A673 (cell line): ENCODE measurements at regions of chr1 and their contacts with region 1.

Region 1: GRCh38 chr1:53278201-53278725 is 39.9 kb upstream of the MAGOH start:
- DNase-seq: peak; percentile 45
- H3K4me3 ChIP-seq: no peak overlapping the region
- H3K27ac ChIP-seq: no peak overlapping the region
- H3K4me1 ChIP-seq: no peaks in the 10 kb centered on the region
- H3K27me3 ChIP-seq: no peaks in the 10 kb centered on the region
- CTCF ChIP-seq: peak; percentile 91

Region 2: DNA sequence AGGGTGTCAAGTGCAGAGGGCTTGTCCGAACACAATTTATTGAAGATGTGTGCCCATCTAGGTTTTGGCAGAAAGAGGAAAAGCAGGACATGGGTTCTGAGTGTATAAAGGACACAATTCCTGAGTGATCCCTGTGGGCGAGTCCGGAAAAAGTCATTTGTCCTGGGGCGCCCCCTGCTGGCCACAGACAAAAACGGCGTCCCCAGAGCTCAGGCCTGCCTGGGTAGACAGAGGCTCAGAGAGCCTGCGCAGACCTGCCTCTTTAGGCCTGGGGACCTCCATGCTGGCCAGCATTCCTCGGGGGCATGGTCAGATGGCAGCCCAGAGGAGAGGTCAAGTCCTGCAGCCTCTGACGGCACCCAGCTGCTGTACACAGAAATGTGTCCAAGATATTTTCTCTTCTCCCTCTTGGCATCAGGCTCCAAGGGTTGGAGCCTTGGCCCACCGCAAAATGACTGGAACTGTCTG is 115.1 kb after region 1 on chr1:
- CTCF ChIA-PET with region 1: interaction called, 12 read pairs
- POLR2A ChIA-PET with region 1: no interaction called
- intact Hi-C with region 1: loop called (anchors 2 kb)
- DNase-seq: peak; percentile 59
- H3K4me3 ChIP-seq: no peak overlapping the region
- H3K27ac ChIP-seq: no peak overlapping the region
- H3K4me1 ChIP-seq: no peaks in the 10 kb centered on the region
- H3K27me3 ChIP-seq: no peaks in the 10 kb centered on the region
- CTCF ChIP-seq: peak; percentile 69

Region 3: GRCh38 chr1:53811414-53811851 is 533.2 kb after region 1 on chr1:
- CTCF ChIA-PET with region 1: no interaction called
- POLR2A ChIA-PET with region 1: no interaction called
- intact Hi-C with region 1: no loop called
- DNase-seq: peak; percentile 36
- H3K4me3 ChIP-seq: no peak overlapping the region
- H3K27ac ChIP-seq: no peak overlapping the region
- H3K4me1 ChIP-seq: no peaks in the 10 kb centered on the region
- H3K27me3 ChIP-seq: no peaks in the 10 kb centered on the region
- CTCF ChIP-seq: peak; percentile 40

Region 4: GRCh38 chr1:54671985-54672608 is 1393.8 kb after region 1 on chr1:
- CTCF ChIA-PET with region 1: no interaction called
- POLR2A ChIA-PET with region 1: no interaction called
- intact Hi-C with region 1: loop called (anchors 10 kb)
- DNase-seq: peak; percentile 65
- H3K4me3 ChIP-seq: no peak overlapping the region
- H3K27ac ChIP-seq: no peak overlapping the region
- H3K4me1 ChIP-seq: no peaks in the 10 kb centered on the region
- H3K27me3 ChIP-seq: no peaks in the 10 kb centered on the region
- CTCF ChIP-seq: peak; percentile 80

Region 5: DNA sequence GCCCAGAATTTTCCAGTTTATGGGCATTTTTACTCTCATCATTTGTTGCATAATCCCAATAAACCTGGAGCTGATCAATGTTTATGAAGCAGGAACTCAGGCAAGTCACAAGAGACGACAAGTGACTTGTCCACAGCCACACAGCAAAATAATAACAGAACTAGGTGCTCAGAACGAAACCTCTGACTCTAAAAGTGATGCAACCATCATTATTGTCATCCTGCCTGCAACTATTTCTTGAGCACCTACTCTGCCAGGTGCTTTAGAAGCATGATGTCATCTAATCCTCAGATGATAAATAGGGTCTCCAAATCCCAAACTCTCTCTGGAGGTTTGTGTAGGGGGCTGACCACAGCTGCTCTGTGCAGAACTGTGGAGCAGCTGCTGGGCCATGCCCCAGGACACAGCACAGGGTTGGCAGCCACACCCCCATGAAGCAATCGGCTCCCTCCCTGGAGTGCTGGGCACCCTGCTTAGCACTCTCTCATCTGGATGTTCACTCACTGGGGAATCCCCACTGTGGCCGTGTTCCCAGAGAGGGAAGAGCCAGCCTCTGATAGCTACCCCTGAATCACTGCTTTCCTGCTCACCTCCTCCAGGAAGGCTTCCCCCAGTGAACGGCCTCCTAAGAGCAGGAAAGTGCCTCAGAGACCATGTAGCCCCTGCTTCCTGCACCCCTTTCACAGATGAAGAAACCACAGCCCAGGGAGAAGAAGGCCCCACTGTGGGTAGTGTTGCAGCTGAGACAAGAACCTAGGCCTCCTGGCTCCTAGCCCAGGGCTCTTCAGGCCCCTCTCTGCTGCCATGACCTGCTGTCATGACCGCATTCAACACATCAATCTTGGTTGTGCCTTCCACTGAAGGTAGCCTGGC is 1520.7 kb after region 1 on chr1:
- CTCF ChIA-PET with region 1: no interaction called
- POLR2A ChIA-PET with region 1: no interaction called
- intact Hi-C with region 1: loop called (anchors 5 kb)
- DNase-seq: no peak
- H3K4me3 ChIP-seq: no peak overlapping the region
- H3K27ac ChIP-seq: no peak overlapping the region
- H3K4me1 ChIP-seq: no peaks in the 10 kb centered on the region
- H3K27me3 ChIP-seq: peaks cover 16% of the 10 kb centered on the region
- CTCF ChIP-seq: no peak